ENCODE measurements at regions of chr5 and their contacts with region 1.

Region 1: GRCh38 chr5:157718519-157718918 is 12.7 kb upstream of the THG1L start:
- DNase-seq: no peak

Region 2: DNA sequence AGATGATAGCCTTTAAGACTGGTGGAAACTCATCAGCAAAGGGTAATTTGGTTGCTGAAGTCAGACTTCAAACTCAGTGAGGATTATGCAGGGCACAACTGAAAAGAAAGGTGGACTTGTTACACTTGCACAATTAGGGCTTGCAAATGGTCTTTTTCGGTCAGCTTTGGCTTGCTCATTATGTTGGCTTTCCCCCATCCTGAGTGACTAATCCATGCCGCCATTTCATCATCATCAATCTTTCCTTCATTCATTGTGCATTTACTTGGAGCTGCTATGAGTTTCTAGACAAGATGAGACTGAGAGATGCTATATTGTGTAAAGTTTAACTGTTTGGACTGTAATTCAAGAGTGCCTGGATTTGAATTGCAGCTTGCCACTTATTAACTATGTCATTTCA is 1003.2 kb before region 1 on chr5:
- intact Hi-C with region 1: no loop called
- DNase-seq: no peak

Region 3: DNA sequence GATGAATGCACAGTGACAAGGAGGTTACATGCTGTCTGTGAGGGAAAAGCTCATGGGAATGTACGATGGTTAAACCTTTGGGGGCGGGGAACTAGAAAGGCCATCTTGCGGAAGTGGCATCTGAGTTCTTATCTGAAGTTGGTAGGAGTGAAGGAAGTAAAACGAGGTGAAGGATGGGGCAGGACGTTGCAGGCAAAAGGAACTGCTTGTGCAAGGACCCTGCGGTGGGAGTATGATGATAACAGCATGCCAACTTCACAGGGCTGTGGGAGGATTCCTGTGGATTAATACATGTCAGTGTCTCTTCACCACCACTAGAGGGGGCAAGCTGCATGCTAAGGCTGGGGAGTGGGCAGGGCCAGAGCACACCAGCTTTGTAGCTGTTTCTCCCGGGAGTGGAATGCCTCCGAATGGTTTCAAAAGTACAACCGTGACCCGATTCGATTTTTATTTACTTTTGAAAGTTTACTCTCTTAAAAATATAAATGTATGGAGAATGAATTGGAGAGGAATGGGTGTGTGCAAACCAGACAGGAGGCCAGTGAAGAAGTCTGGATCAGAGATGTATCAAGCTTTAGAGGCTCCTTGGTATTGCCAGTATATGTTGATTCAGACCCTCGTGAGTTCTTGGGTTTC is 390.1 kb before region 1 on chr5:
- intact Hi-C with region 1: loop called (anchors 2 kb)
- DNase-seq: peak; percentile 86

Region 4: GRCh38 chr5:157431544-157432200 is 286.8 kb before region 1 on chr5:
- intact Hi-C with region 1: loop called (anchors 2 kb)
- DNase-seq: no peak

Region 5: DNA sequence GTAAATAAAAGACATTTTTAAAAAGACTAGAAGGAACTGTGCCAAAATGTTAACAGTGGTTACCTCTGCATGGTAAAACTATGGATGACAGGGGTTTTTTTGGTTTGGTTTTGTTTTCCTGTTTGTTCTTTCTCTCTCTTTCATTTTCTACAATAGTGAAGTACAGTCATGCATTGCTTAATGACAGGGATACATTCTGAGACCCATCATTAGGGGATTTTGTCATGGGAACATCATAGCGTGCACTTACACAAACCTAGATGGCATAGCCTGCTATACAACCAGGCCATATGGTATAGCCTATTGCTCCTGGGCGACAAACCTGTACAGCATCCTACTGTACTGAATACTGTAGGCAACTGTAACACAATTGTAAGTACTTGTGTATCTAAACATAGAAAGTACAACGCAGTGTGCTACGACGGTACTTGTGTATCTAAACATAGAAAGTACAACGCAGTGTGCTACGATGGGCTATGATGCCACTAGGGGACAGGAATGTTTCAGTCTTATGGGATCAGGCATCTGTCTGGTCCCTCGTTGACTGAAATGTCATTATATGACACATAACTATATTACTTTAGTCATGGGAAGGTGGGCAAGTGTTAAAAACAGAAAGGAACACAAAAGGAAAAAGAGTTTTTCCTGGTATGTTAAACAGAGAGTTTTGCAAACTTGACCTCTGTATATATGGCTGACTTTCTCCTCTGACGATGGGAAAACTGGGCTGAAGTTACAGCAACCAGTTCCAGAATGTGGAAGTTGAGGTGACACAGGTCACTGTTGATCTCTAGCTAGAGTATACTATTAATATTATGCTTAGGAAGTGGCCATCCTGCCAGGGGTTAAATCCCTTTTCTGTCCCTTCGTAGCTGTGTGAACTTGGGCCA is 135.5 kb before region 1 on chr5:
- intact Hi-C with region 1: loop called (anchors 10 kb)
- DNase-seq: no peak

Measured in cardiac septum (tissue), 1 donor.